ENCODE measurements at regions of chr11 and their contacts with region 1.

Region 1: GRCh38 chr11:96168623-96169022 is 174.4 kb downstream of the MAML2 start:
- DNase-seq: no peak
- ATAC-seq: peak; percentile 91

Region 2: GRCh38 chr11:96037405-96037936 is 131.2 kb before region 1 on chr11:
- intact Hi-C with region 1: no loop called
- DNase-seq: no peak
- ATAC-seq: no peak

Region 3: DNA sequence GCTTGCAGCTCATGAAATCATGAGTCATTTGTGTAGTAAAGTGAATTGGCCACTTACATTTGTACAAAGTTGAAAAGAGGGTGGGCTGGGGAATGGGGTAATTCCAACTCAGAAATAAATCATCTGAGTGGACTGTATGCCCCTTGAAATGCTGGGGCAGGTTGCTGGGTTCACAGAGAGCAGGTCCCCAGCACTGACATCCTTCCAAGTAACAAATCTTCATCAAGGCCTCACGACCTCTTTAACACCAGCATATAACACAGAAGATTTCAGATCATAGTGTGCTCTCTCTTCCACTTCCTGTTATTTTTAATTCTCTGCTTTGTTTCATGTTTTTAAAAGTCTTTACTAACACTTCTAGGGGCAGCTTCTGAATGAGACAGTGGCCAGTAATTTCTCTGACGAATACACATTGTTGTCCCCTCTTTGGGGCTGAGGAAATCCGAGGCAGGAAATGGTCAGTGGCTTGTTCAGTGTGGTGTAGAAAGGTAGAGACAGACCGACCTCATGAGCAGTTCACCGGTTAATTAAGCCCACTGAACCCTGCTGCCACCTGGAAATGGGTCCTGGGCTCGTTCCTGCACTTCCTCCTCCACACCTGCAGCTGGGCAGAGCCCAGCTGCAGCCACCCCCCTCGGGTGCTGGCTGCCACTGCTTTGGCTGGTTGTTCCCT is 46.6 kb after region 1 on chr11:
- intact Hi-C with region 1: loop called (anchors 5 kb)
- DNase-seq: no peak
- ATAC-seq: peak; percentile 24

Measured in Right ventricle myocardium inferior (tissue), 1 donor.